IMR-90 (cell line): ENCODE measurements at regions of chr4 and their contacts with region 1.

Region 1: GRCh38 chr4:114399105-114399504 is 199.5 kb upstream of the UGT8 start:
- DNase-seq: no peak
- ATAC-seq: no peak
- H3K4me3 ChIP-seq: no peak overlapping the region
- H3K27ac ChIP-seq: no peak overlapping the region
- H3K4me1 ChIP-seq: no peaks in the 10 kb centered on the region
- H3K27me3 ChIP-seq: peaks cover 7% of the 10 kb centered on the region
- CTCF ChIP-seq: no peak
- POLR2A ChIP-seq: no peak
- RAD21 ChIP-seq: no peak

Region 2: GRCh38 chr4:114659386-114660008 is 260.4 kb after region 1 on chr4:
- CTCF ChIA-PET with region 1: no interaction called
- POLR2A ChIA-PET with region 1: no interaction called
- dilution Hi-C with region 1: no loop called
- in situ Hi-C with region 1: loop called (anchors 10 kb)
- intact Hi-C with region 1: no loop called
- DNase-seq: peak; percentile 64
- ATAC-seq: peak; percentile 92
- H3K4me3 ChIP-seq: no peak overlapping the region
- H3K27ac ChIP-seq: no peak overlapping the region
- H3K4me1 ChIP-seq: no peaks in the 10 kb centered on the region
- H3K27me3 ChIP-seq: no peaks in the 10 kb centered on the region
- CTCF ChIP-seq: peak; percentile 67
- POLR2A ChIP-seq: no peak
- RAD21 ChIP-seq: peak; percentile 56; the same call in 1 of the 2 replicates

Region 3: GRCh38 chr4:114674080-114674479 is 275.0 kb after region 1 on chr4:
- CTCF ChIA-PET with region 1: no interaction called
- POLR2A ChIA-PET with region 1: no interaction called
- dilution Hi-C with region 1: no loop called
- in situ Hi-C with region 1: no loop called
- intact Hi-C with region 1: no loop called
- DNase-seq: no peak
- ATAC-seq: no peak
- H3K4me3 ChIP-seq: no peak overlapping the region
- H3K27ac ChIP-seq: no peak overlapping the region
- H3K4me1 ChIP-seq: no peaks in the 10 kb centered on the region
- H3K27me3 ChIP-seq: no peaks in the 10 kb centered on the region
- CTCF ChIP-seq: no peak
- POLR2A ChIP-seq: no peak
- RAD21 ChIP-seq: no peak